ENCODE measurements at regions of chr1 and their contacts with region 1.

Region 1: DNA sequence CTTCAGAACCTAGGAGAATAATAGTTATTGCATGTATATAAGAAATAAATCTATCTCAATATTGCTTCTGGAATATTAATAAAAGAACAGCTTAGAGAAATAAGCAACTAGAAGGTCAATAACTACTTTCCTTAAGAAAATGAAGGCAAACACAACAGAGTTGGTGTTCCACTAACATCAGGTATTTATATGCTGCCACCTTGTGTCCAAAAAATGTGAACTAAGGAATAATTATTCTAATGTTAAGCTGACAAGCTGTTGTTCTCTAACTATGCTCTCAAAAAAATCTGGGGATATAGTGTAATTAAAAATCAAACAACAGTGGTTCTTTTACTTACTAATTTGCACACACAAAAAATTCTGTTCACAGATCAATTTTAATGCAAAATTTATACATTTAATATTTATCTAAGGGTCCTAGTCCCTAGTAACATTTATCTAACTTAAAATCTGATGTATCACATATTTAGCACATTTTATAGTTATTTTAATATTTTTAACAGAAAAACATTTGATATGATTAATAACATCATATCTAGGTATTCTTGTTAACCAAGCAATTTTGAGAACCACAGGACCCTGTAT is 39.6 kb downstream of the UCHL5 start:
- DNase-seq: no peak
- ATAC-seq: peak; percentile 63
- H3K4me3 Mint-ChIP-seq: no peak overlapping the region
- H3K27ac Mint-ChIP-seq: no peak overlapping the region
- H3K4me1 Mint-ChIP-seq: no peaks in the 10 kb centered on the region
- H3K27me3 Mint-ChIP-seq: no peaks in the 10 kb centered on the region

Region 2: GRCh38 chr1:192477630-192478029 is 541.9 kb before region 1 on chr1:
- CTCF ChIA-PET with region 1: interaction called, 12 read pairs
- POLR2A ChIA-PET with region 1: no interaction called
- DNase-seq: no peak
- ATAC-seq: peak; percentile 55
- H3K4me3 Mint-ChIP-seq: no peak overlapping the region
- H3K27ac Mint-ChIP-seq: no peak overlapping the region
- H3K4me1 Mint-ChIP-seq: no peaks in the 10 kb centered on the region
- H3K27me3 Mint-ChIP-seq: peaks cover 7% of the 10 kb centered on the region

Region 3: DNA sequence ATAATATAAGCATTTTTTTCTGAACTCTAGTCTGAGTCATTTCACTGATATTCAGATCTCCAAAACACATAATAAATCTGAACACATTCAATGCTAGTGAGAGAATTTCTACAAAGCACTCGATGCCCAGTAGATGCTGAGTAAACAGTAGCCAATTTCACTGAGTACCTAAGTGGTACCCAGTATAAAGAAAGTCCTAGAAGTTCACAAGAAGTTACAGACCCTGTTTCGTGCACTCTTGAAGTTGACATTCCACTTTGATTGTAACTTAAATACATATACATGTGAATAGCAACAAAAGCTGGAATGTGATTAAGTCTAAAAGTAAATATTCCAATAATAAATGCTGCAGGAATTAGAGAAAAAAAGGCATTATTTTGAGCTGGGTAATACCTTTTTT is 243.9 kb before region 1 on chr1:
- CTCF ChIA-PET with region 1: no interaction called
- POLR2A ChIA-PET with region 1: no interaction called
- DNase-seq: no peak
- ATAC-seq: no peak
- H3K4me3 Mint-ChIP-seq: no peak overlapping the region
- H3K27ac Mint-ChIP-seq: no peak overlapping the region
- H3K4me1 Mint-ChIP-seq: no peaks in the 10 kb centered on the region
- H3K27me3 Mint-ChIP-seq: peaks cover 7% of the 10 kb centered on the region

Region 4: DNA sequence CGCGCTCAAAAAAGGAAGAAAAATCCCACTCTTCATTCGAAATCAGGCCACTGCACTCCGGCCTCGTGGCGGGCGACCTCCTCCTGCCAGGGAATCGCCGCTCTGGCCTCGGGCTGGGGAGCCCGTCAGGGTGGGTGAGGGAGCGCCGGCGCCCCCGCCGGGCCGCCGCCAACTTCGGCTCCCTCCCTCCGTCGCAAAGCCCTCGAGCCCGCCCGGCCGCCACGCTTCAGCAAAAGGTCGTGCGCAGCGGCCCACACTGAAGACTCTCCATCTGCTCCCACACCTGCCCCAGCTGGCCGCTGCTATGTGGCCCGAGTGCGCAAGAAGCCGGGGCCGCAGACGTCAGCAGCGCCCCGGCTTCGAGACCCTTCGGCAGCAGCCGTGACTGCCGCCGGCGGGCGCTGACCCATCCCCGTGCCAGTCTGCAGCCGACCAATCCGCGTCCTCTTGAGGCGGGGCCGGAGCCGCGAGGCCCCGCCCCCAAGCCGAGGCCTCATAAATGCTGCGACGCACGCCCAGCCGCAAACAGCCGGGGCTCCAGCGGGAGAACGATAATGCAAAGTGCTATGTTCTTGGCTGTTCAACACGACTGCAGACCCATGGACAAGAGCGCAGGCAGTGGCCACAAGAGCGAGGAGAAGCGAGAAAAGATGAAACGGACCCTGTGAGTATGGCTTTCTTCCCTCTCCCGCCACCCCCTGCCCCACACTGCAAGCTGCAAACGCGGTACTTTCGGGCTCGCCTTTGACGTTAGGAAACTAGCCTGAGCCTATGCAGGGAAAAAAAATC is 210.8 kb before region 1 on chr1 and contains the start of gene RGS2:
- CTCF ChIA-PET with region 1: interaction called, 80 read pairs
- POLR2A ChIA-PET with region 1: interaction called, 3 read pairs
- DNase-seq: peak; percentile 89
- ATAC-seq: peak; percentile 94
- H3K4me3 Mint-ChIP-seq: peak within 1 kb of the TSS; percentile 87
- H3K27ac Mint-ChIP-seq: peak within 1 kb of the TSS; percentile 87
- H3K4me1 Mint-ChIP-seq: peaks cover 26% of the 10 kb centered on the region
- H3K27me3 Mint-ChIP-seq: peaks cover 12% of the 10 kb centered on the region
- total RNA-seq, gene RGS2: 6.2 to 6.5 TPM